A549 (cell line): ENCODE measurements at regions of chr16 and their contacts with region 1.

Region 1: DNA sequence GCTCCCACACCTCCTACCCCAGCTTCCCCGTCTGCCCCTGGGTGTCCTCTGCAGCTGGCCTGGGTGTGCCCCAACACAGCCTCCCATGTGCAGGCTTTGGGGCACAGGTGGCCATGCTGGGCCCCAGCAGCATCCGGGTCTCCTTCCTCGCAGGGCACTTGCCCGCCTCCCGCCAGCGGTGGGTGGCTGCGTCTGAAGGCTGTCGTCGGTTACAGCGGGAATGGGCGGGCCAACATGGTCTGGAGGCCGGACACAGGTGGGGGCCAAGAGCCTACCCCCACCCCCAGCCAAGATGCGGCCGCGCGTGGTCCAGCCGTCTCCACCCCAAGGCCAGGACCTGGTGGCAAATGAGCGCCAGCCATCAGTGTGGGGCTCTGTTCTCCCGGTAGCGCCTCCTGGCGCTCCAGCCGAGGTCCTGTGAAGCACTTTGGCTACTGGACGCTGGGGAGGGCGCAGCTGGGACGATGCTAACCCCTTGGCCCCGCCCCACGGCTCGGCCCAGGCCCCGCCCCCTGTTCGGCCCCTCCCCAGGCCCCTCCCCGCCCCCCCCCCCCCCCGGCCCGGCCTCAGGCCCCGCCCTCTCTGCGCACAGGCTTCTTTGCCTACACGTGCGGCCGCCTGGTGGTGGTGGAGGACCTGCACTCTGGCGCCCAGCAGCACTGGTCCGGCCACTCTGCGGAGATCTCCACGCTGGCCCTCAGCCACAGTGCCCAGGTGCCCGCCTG is 7.3 kb upstream of the RHOT2 start:
- DNase-seq: peak; percentile 70 to 94
- ATAC-seq: peak; percentile 78 to 90
- H3K4me3 ChIP-seq: no peak overlapping the region
- H3K27ac ChIP-seq: peak overlapping the region; percentile 71 to 87; a peak in 5 of 6 replicates
- H3K4me1 ChIP-seq: peaks cover 14% of the 10 kb centered on the region
- CTCF ChIP-seq: peak; percentile 48
- EP300 ChIP-seq: no peak
- POLR2A ChIP-seq: no peak
- RAD21 ChIP-seq: peak; percentile 40 to 54; a peak in 4 of 5 replicates

Region 2: GRCh38 chr16:590165-591065 is 70.2 kb before region 1 on chr16:
- CTCF ChIA-PET with region 1: interaction called, 14 read pairs
- POLR2A ChIA-PET with region 1: interaction called, 3 read pairs
- DNase-seq: no peak
- ATAC-seq: peak in 1 of 2 experiments; percentile 8; a peak in 3 of 6 replicates
- H3K4me3 ChIP-seq: peak overlapping the region; percentile 90
- H3K27ac ChIP-seq: peak overlapping the region; percentile 80 to 93
- H3K4me1 ChIP-seq: peaks cover 39% of the 10 kb centered on the region
- CTCF ChIP-seq: no peak
- EP300 ChIP-seq: no peak
- POLR2A ChIP-seq: peak; percentile 29
- RAD21 ChIP-seq: no peak; a peak in 1 of 5 replicates

Region 3: GRCh38 chr16:641302-642188 is 19.1 kb before region 1 on chr16 and contains the start of gene MCRIP2:
- CTCF ChIA-PET with region 1: interaction called, 12 read pairs
- POLR2A ChIA-PET with region 1: no interaction called
- DNase-seq: peak; percentile 77 to 84
- ATAC-seq: peak; percentile 57 to 71
- H3K4me3 ChIP-seq: peak within 1 kb of the TSS; percentile 54
- H3K27ac ChIP-seq: peak within 1 kb of the TSS; percentile 64 to 94
- H3K4me1 ChIP-seq: peaks cover 43% of the 10 kb centered on the region
- CTCF ChIP-seq: no peak
- EP300 ChIP-seq: no peak
- POLR2A ChIP-seq: peak; percentile 72
- RAD21 ChIP-seq: no peak
- polyA plus RNA-seq, gene MCRIP2: 10.7 and 12.9 TPM in 2 replicates

Region 4: DNA sequence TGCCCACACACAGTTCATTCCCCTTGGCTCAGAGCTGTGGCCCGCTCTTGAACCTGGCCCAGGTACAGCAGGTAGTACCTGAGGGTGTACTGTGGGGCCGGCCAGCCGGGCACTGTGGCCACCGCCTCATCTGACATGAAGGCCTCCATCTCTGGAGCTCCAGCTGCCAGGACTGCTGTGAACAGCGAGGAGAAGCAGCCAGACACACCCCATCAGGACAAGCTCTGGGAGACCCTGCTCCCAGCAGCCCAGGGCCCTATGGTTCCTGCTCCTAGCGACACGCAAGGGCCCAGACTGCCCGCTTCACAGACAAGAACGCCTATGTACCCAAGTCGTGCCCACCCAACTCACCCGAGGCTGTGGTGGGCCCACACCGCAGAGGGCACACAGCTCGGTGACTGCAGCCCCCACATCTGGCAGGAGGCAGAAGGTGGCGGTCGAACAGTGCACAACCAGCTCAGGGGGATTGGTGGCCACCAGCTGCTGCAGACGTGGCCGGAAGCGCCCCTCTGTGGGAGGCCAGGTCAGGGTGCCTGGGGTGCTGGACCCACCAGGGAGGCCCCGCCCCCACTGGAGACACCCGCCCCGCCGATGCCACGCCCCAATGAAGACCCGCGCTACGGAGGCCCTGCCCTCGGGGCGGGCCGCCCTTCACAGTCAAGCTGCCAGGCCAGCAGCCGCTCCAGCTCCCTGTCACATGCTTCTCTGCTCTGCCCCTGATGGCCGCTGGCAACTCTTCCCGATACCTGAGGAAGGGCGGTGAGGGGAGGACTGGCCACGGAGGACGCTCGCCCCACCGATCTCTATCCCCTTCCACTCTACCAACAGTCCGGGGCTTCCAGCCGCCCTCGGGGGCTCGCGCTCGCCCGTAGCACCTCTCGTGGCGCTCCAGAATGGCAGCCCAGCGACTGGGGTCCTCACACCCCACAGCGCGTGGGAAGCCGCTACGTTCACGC is 18.5 kb after region 1 on chr16:
- CTCF ChIA-PET with region 1: interaction called, 21 read pairs
- POLR2A ChIA-PET with region 1: interaction called, 3 read pairs
- DNase-seq: peak in 1 of 2 experiments; percentile 67
- ATAC-seq: peak; percentile 1 to 19; a peak in 4 of 6 replicates
- H3K4me3 ChIP-seq: peak overlapping the region; percentile 54
- H3K27ac ChIP-seq: peak overlapping the region; percentile 67 to 97
- H3K4me1 ChIP-seq: peaks cover 49% of the 10 kb centered on the region
- CTCF ChIP-seq: no peak
- EP300 ChIP-seq: no peak
- POLR2A ChIP-seq: no peak; the same call in 1 of the 2 replicates
- RAD21 ChIP-seq: no peak

Region 5: DNA sequence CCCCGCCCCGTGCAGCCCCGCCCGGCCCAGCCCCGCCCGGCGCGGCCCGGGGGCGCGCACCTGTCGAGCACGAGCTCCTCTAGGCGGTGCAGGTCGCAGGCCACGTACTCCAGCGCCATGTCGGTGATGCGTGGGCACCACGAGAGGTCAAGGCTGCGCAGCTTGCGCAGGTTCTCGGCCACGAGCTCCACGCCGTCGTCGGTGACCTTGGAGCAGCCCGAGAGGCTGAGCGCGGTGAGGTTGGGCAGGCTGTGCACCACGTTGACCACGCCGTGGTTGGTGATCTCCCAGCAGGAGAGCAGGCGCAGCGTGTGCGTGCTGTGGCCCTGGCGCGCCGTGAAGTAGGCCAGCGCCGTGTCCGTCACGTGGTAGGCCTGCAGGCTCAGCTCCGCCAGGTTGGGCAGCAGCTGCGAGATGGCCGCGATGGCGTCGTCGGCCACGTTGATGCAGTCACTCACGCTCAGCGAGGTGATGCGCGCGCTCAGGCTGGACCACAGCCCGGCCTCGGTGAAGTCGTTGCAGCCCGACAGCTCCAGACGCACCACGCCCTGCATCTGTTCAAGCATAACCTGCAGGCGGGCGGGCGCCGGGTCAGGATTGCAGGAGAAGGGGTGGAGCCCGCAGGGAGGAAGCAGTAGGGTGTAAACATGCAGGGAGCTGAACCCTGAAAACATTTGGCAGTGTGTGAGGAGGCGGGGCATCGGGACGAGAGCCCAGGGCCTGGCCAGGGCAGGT is 34.9 kb after region 1 on chr16:
- CTCF ChIA-PET with region 1: no interaction called
- POLR2A ChIA-PET with region 1: no interaction called
- DNase-seq: peak in 1 of 2 experiments; percentile 78
- ATAC-seq: peak; percentile 38 to 61
- H3K4me3 ChIP-seq: peak overlapping the region; percentile 37
- H3K27ac ChIP-seq: peak overlapping the region; percentile 51 to 76; a peak in 5 of 6 replicates
- H3K4me1 ChIP-seq: peaks cover 22% of the 10 kb centered on the region; the same call in 2 of the 3 replicates
- CTCF ChIP-seq: no peak
- EP300 ChIP-seq: no peak
- POLR2A ChIP-seq: peak; percentile 42; the same call in 1 of the 2 replicates
- RAD21 ChIP-seq: no peak

Region 6: DNA sequence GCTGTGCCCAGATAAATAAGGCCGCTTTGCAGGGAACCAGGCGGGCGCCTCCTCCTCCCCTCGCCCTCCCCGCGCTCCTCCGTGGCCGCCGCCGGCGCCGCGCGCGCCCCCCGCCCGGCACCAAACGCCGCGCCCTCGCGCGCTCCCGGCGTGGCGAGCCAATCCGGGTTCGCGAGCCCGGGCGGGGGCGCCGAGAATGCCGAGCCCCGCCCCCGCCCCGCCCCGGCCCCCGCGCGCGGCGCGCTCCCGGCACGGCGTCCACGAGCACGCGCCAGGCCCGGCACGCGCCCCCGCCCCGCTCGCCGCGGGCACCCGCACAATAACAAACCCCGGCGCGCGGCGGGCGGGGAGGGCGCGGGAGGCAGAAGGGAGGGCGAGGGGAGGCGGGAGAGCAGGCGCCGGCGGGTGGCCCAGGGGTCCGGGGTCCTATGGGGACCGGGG is 45.1 kb after region 1 on chr16 and contains the start of gene FBXL16:
- CTCF ChIA-PET with region 1: no interaction called
- POLR2A ChIA-PET with region 1: no interaction called
- DNase-seq: no peak
- ATAC-seq: no peak
- H3K4me3 ChIP-seq: peak within 1 kb of the TSS; percentile 59
- H3K27ac ChIP-seq: peak within 1 kb of the TSS; percentile 73 to 75; a peak in 5 of 6 replicates
- H3K4me1 ChIP-seq: peaks cover 38% of the 10 kb centered on the region
- CTCF ChIP-seq: no peak
- EP300 ChIP-seq: no peak
- POLR2A ChIP-seq: no peak
- RAD21 ChIP-seq: no peak
- polyA plus RNA-seq, gene FBXL16: 0.53 and 0.54 TPM in 2 replicates

Region 7: GRCh38 chr16:740764-741505 is 80.3 kb after region 1 on chr16 and contains the start of gene CIAO3:
- CTCF ChIA-PET with region 1: no interaction called
- POLR2A ChIA-PET with region 1: no interaction called
- DNase-seq: peak; percentile 83 to 93
- ATAC-seq: peak; percentile 75 to 87
- H3K4me3 ChIP-seq: peak within 1 kb of the TSS; percentile 96
- H3K27ac ChIP-seq: peak within 1 kb of the TSS; percentile 95 to 96
- H3K4me1 ChIP-seq: peaks cover 6% of the 10 kb centered on the region; the same call in 2 of the 3 replicates
- CTCF ChIP-seq: peak; percentile 93
- EP300 ChIP-seq: no peak
- POLR2A ChIP-seq: peak; percentile 72
- RAD21 ChIP-seq: peak in 1 of 2 experiments; percentile 42; a peak in 2 of 5 replicates
- polyA plus RNA-seq, gene CIAO3: 17.4 and 19.3 TPM in 2 replicates